CD8-positive, alpha-beta T cell (primary cell): ENCODE measurements at regions of chr9 and their contacts with region 1.

Region 1: DNA sequence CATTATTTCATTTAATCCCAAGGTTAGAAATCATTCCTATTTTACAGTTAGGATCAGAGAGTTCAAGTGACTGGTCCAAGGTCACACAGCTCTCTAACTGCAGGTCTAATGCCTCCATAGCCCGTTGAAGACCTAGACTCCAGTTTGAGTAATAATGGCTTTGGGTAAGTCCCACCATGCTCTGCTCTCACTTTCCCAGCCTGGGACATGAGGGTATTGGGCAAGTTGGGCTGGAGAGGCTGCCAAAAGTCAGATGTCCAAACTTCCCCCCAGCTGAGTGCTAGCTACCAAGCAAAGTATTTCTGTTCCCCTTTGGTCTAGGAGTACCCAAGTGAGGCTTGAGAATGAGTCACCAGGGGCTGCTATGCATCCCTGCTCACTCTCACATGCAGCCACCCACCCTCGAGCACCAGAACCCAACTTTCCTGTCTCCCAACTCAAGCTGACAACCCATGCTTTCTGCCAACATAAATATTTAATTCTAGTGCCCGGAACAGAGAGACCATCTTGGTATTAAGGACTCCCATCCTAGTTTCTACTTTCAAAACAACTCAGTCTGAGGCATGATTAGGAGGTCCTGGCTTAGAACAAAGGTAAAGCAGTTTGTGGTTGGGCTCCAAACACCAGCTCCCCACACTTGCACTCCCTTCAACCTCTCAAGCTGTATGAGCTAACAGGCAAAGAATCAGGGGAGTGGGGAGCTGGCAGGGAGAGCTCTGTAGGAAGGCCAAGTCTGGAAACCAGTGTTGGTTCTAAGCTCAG is 236.5 kb upstream of the TRIM32 start:
- DNase-seq: no peak
- ATAC-seq: no peak
- H3K4me3 ChIP-seq: no peak overlapping the region
- H3K4me3 Mint-ChIP-seq: no peak overlapping the region
- H3K27ac ChIP-seq: no peak overlapping the region
- H3K27ac Mint-ChIP-seq: no peak overlapping the region
- H3K4me1 ChIP-seq: no peaks in the 10 kb centered on the region
- H3K4me1 Mint-ChIP-seq: no peaks in the 10 kb centered on the region
- H3K27me3 ChIP-seq: no peaks in the 10 kb centered on the region
- H3K27me3 Mint-ChIP-seq: no peaks in the 10 kb centered on the region
- CTCF ChIP-seq: no peak

Region 2: GRCh38 chr9:115850548-115851304 is 599.8 kb before region 1 on chr9:
- CTCF ChIA-PET with region 1: no interaction called
- POLR2A ChIA-PET with region 1: no interaction called
- intact Hi-C with region 1: no loop called
- DNase-seq: no peak
- ATAC-seq: no peak
- H3K4me3 ChIP-seq: no peak overlapping the region
- H3K4me3 Mint-ChIP-seq: no peak overlapping the region
- H3K27ac ChIP-seq: no peak overlapping the region
- H3K27ac Mint-ChIP-seq: no peak overlapping the region
- H3K4me1 ChIP-seq: no peaks in the 10 kb centered on the region
- H3K4me1 Mint-ChIP-seq: no peaks in the 10 kb centered on the region
- H3K27me3 ChIP-seq: no peaks in the 10 kb centered on the region
- H3K27me3 Mint-ChIP-seq: no peaks in the 10 kb centered on the region
- CTCF ChIP-seq: no peak

Region 3: DNA sequence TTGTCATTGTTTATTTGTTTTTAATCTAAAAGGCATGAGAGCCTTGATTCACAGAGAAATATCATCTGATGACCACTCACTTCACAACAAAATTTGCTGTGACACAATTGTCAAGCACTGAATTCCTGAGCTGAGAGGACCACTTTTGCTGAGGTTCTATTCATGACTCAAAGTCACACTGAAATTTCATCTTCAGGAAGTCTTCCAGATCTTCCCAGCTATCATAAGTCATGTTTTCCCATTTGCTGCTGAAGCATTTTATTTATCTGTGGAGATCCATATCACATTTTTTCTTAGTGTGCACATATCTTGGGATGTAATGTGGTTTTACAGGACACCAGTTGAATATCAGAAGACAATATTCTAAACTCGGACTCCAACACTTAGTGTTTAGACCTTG is 18.5 kb before region 1 on chr9:
- CTCF ChIA-PET with region 1: no interaction called
- POLR2A ChIA-PET with region 1: interaction called, 3 read pairs
- intact Hi-C with region 1: loop called in 1 of 2 experiments (anchors 1 kb)
- DNase-seq: no peak
- ATAC-seq: no peak
- H3K4me3 ChIP-seq: no peak overlapping the region
- H3K4me3 Mint-ChIP-seq: no peak overlapping the region
- H3K27ac ChIP-seq: no peak overlapping the region
- H3K27ac Mint-ChIP-seq: no peak overlapping the region
- H3K4me1 ChIP-seq: no peaks in the 10 kb centered on the region
- H3K4me1 Mint-ChIP-seq: no peaks in the 10 kb centered on the region
- H3K27me3 ChIP-seq: no peaks in the 10 kb centered on the region
- H3K27me3 Mint-ChIP-seq: no peaks in the 10 kb centered on the region
- CTCF ChIP-seq: no peak

Region 4: DNA sequence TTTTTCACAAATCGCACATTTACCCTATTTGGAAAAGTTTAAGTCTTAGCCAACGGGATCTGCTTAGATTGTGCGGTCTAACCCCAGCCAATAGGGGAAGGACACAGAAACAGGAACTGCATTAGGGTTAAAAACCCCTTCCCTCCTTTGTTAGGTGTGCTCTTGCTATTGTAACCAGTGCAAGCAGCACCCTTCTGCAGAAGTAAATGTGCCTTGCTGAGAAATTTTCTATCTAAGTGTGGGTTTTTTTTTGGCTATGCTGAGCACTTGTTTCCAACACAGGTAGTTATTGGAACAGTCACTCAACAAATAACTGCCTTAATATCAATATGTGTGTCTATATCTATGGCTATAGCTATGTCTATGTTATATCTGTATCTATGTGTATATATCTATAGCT is 426.5 kb after region 1 on chr9:
- CTCF ChIA-PET with region 1: no interaction called
- POLR2A ChIA-PET with region 1: no interaction called
- intact Hi-C with region 1: no loop called
- DNase-seq: no peak
- ATAC-seq: no peak
- H3K4me3 ChIP-seq: no peak overlapping the region
- H3K4me3 Mint-ChIP-seq: no peak overlapping the region
- H3K27ac ChIP-seq: no peak overlapping the region
- H3K27ac Mint-ChIP-seq: no peak overlapping the region
- H3K4me1 ChIP-seq: no peaks in the 10 kb centered on the region
- H3K4me1 Mint-ChIP-seq: no peaks in the 10 kb centered on the region
- H3K27me3 ChIP-seq: no peaks in the 10 kb centered on the region
- H3K27me3 Mint-ChIP-seq: peaks cover 9% of the 10 kb centered on the region
- CTCF ChIP-seq: no peak